Activated B cell treated with CpG ODN at 0.5 μM for 24 hours (primary cell): ENCODE measurements at regions of chr5 and their contacts with region 1.

Region 1: GRCh38 chr5:176609724-176610434 is at the start of gene GPRIN1:
- DNase-seq: peak; percentile 82
- ATAC-seq: peak; percentile 74
- H3K4me3 Mint-ChIP-seq: peak within 1 kb of the TSS; percentile 87
- H3K27ac Mint-ChIP-seq: peak within 1 kb of the TSS; percentile 65
- H3K4me1 Mint-ChIP-seq: peaks cover 10% of the 10 kb centered on the region
- H3K27me3 Mint-ChIP-seq: peaks cover 18% of the 10 kb centered on the region
- CTCF ChIP-seq: no peak
- total RNA-seq, gene GPRIN1: 2.8 and 3.2 TPM in 2 replicates

Region 2: DNA sequence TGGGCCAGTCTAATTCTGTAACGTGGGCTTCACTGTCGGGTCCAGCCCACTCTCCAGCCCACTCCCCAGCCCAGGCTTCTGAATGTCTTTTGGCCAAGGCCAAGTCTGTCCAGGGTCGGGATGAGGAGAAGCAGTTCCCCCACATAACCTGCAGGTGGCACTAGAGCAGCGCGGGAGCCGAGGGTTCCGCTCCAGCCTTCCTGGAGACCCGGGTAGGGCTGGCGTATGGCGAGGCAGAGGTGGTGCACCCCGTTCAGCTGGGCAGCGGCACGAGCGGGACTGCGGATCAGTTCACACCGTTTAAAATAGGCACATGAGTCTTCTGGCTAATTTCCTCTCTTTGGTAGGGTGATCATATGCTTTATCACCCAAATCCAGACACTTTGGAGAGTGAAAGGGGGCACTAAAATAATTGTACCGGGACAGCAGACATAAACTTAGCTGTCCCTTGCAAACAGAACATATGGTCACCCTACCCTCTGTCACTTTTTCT is 1699.6 kb before region 1 on chr5:
- CTCF ChIA-PET with region 1: no interaction called
- POLR2A ChIA-PET with region 1: no interaction called
- intact Hi-C with region 1: no loop called
- DNase-seq: no peak
- ATAC-seq: peak; percentile 34
- H3K4me3 Mint-ChIP-seq: no peak overlapping the region
- H3K27ac Mint-ChIP-seq: no peak overlapping the region
- H3K4me1 Mint-ChIP-seq: no peaks in the 10 kb centered on the region
- H3K27me3 Mint-ChIP-seq: peaks cover 8% of the 10 kb centered on the region
- CTCF ChIP-seq: no peak

Region 3: DNA sequence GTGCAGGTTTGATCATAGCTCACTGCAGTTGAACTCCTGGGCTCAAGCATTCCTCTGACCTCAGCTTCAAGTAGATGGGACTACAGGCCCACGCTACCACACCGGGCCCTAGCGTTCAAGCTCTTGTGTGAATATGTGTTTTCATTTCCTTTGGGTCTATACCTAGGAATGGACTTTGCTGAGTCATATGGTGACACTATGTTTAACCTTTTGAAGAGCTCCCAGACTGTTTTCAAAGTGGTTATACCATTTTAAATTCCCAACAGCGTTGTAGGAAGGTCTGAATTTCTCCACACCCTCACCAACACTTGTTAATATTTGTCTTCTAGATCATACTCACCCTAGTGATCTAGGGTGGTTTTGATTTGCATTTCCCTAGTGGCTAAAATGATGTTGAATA is 128.2 kb before region 1 on chr5:
- CTCF ChIA-PET with region 1: no interaction called
- POLR2A ChIA-PET with region 1: no interaction called
- intact Hi-C with region 1: no loop called
- DNase-seq: no peak
- ATAC-seq: no peak
- H3K4me3 Mint-ChIP-seq: no peak overlapping the region
- H3K27ac Mint-ChIP-seq: no peak overlapping the region
- H3K4me1 Mint-ChIP-seq: peaks cover 2% of the 10 kb centered on the region
- H3K27me3 Mint-ChIP-seq: no peaks in the 10 kb centered on the region
- CTCF ChIP-seq: no peak

Region 4: GRCh38 chr5:176529741-176530141 is 80.1 kb before region 1 on chr5:
- CTCF ChIA-PET with region 1: no interaction called
- POLR2A ChIA-PET with region 1: no interaction called
- intact Hi-C with region 1: no loop called
- DNase-seq: peak; percentile 34
- ATAC-seq: peak; percentile 19
- H3K4me3 Mint-ChIP-seq: peak overlapping the region; percentile 19
- H3K27ac Mint-ChIP-seq: peak overlapping the region; percentile 85
- H3K4me1 Mint-ChIP-seq: peaks cover 52% of the 10 kb centered on the region
- H3K27me3 Mint-ChIP-seq: no peaks in the 10 kb centered on the region
- CTCF ChIP-seq: no peak

Region 5: DNA sequence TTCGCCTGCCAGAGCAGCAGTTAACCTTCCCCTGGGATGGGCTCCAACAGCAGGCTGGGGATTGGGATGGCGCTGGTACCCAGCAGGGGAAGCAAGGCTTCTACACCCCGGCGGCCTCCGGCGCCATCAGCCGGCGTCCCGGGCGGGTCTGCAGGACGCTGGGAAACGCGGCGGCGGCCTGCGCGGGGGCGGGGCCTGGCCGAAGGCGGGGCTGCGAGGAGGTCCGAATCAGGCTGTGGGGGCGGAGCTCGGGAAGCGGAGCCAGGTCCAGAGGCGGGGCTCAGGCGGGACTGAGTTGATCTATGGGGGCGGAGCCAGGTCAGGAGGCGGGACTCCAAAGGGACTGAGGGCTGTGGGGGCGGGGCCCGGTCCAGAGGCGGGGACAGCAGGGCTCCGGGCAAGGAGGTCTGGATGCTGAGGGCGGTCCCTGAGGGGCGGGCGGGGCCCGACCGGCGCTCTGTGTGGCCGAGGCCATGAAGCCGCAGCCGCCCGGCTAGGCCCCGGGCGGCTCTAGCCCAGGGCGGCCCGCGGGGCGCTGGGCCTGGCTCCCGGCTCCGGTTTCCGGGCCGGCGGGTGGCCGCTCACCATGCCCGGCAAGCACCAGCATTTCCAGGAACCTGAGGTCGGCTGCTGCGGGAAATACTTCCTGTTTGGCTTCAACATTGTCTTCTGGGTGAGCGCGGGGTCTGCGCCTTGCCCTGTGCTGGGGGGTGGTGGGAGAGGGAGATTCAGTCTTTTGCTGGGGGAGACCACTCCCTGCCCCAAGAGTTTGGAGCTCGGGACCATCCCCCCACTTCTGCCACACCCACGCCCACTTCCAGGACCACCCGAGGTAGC is 37.4 kb after region 1 on chr5 and contains the start of gene TSPAN17:
- CTCF ChIA-PET with region 1: no interaction called
- POLR2A ChIA-PET with region 1: interaction called, 4 read pairs
- intact Hi-C with region 1: loop called (anchors 1 kb)
- DNase-seq: peak; percentile 99
- ATAC-seq: peak; percentile 97
- H3K4me3 Mint-ChIP-seq: peak within 1 kb of the TSS; percentile 90
- H3K27ac Mint-ChIP-seq: peak within 1 kb of the TSS; percentile 91
- H3K4me1 Mint-ChIP-seq: peaks cover 45% of the 10 kb centered on the region
- H3K27me3 Mint-ChIP-seq: no peaks in the 10 kb centered on the region
- CTCF ChIP-seq: no peak
- total RNA-seq, gene TSPAN17: 20.7 and 27.7 TPM in 2 replicates